ENCODE measurements at regions of chr6 and their contacts with region 1.

Region 1: GRCh38 chr6:130697995-130698535 is 129.1 kb upstream of the SMLR1 start:
- DNase-seq: peak in 3 of 5 donors; percentile 20 to 55 (median 41)
- H3K4me3 ChIP-seq: no peak overlapping the region
- H3K27ac ChIP-seq: no peak overlapping the region
- H3K4me1 ChIP-seq: no peaks in the 10 kb centered on the region
- H3K27me3 ChIP-seq: no peaks in the 10 kb centered on the region
- CTCF ChIP-seq: peak; percentile 66

Region 2: GRCh38 chr6:130322673-130323268 is 375.3 kb before region 1 on chr6:
- intact Hi-C with region 1: loop called (anchors 10 kb)
- DNase-seq: peak in 2 of 5 donors; percentile 67 to 82
- H3K4me3 ChIP-seq: no peak overlapping the region
- H3K27ac ChIP-seq: no peak overlapping the region
- H3K4me1 ChIP-seq: no peaks in the 10 kb centered on the region
- H3K27me3 ChIP-seq: no peaks in the 10 kb centered on the region
- CTCF ChIP-seq: peak; percentile 78

Region 3: DNA sequence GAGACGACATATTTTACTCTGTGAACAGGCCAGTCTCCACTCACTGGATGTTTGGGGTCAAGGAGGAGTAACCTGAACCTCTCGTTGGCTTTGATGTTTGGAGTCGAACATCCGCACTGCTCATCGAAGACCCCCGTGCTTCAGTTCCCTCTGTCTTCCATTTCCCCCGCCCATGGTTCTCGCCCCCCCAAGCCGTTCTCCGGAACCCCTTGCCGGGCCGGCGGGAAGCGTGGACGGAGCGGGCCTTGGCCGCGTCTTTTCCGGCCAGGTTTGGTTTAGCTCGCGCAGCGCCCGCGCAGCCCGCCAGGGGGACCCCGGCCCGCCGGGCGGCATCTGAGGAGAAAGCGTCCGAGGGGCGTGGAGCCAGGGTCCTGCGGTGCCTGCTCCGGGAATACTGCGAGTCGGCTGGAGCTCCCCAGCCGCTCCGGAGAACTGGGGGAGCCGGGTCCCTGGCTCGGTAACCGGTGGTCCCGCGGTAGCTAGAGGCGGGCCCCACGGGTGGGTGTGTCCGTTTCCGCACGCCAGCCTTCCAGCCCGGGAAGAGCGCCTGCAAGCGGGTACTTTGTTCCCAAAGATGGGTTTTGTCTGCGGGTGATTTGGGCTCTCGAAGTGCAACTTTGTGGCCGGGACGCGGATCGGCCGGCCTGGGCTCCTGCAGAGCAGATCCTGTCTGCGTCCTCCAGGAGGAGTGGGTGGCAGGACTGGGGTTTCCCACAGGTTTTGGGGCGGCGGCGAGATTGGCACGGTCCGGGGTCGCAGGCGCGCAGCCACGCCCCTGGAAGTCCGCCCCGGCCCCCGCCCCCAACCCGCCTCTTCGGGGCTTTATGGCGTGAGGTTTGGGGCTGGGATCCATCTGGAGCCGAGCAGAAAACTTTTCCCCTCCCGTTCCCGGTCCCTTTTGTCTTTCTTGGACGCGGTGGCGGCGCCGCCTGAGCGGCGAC is 332.6 kb before region 1 on chr6 and contains the start of gene TMEM200A:
- intact Hi-C with region 1: loop called (anchors 10 kb)
- DNase-seq: peak; percentile 83 to 92 (median 88)
- H3K4me3 ChIP-seq: peak within 1 kb of the TSS; percentile 77 to 85 (median 77)
- H3K27ac ChIP-seq: peak within 1 kb of the TSS; percentile 49 to 64
- H3K4me1 ChIP-seq: peaks cover 0 to 11% (median 0%) of the 10 kb centered on the region in 3 donors
- H3K27me3 ChIP-seq: no peaks in the 10 kb centered on the region
- CTCF ChIP-seq: peak; percentile 36
- total RNA-seq, gene TMEM200A: 17.9 TPM

Region 4: GRCh38 chr6:130825772-130826441 is 127.8 kb after region 1 on chr6:
- intact Hi-C with region 1: no loop called
- DNase-seq: no peak
- H3K4me3 ChIP-seq: no peak overlapping the region
- H3K27ac ChIP-seq: no peak overlapping the region
- H3K4me1 ChIP-seq: no peaks in the 10 kb centered on the region
- H3K27me3 ChIP-seq: no peaks in the 10 kb centered on the region
- CTCF ChIP-seq: no peak

Measured in kidney (tissue), 22 donors.